CD4-positive, alpha-beta T cell (primary cell): ENCODE measurements at regions of chr18 and their contacts with region 1.

Region 1: DNA sequence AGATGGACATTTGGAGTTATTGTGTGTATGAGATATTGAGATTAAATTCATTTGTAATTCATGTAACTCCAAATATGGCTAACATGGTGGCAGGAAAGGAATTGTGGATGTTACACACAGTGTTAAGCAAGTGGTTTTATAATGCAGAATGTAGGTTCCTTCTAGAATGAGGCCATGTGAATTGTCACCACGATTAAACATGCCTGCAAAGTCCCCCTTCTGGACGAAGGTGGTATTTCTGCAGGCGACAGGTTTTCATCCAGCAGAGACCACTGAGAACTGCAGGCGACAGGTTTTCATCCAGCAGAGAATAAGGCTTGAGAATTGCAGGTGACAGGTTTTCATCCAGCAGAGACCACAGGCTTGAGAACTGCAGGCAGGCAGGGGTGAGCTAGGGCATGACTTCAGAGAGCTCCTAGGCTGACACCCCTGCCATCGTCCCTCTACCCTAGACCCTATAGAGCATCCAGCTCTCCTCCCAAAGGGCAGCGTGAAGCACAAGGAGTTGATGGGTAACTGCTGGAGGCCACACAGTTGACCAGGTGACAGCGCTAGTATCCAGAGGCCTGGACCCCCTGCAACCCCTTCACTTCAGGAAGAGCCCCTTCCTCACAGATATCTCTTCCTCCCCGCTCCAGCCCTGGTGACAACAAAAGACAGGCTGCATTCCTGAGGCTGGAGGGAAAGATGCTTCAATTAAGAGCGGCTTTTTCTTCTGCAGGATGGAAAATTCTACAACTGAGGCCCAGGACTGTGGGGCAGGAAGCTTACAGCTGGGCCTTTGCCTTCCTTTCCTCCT is 175.8 kb downstream of the LOXHD1 start:
- DNase-seq: peak; percentile 24 to 68 (median 48)
- ATAC-seq: peak; percentile 61
- H3K4me3 ChIP-seq: no peak overlapping the region
- H3K4me3 Mint-ChIP-seq: no peak overlapping the region
- H3K27ac ChIP-seq: no peak overlapping the region
- H3K27ac Mint-ChIP-seq: no peak overlapping the region
- H3K4me1 ChIP-seq: no peaks in the 10 kb centered on the region
- H3K4me1 Mint-ChIP-seq: no peaks in the 10 kb centered on the region
- H3K27me3 ChIP-seq: peaks cover 0 to 5% of the 10 kb centered on the region in 2 experiments
- H3K27me3 Mint-ChIP-seq: peaks cover 22% of the 10 kb centered on the region
- CTCF ChIP-seq: peak; percentile 65

Region 2: GRCh38 chr18:46424898-46425297 is 56.3 kb before region 1 on chr18:
- CTCF ChIA-PET with region 1: no interaction called
- POLR2A ChIA-PET with region 1: no interaction called
- intact Hi-C with region 1: loop called in 1 of 2 experiments (anchors 10 kb)
- DNase-seq: no peak
- ATAC-seq: no peak
- H3K4me3 ChIP-seq: no peak overlapping the region
- H3K4me3 Mint-ChIP-seq: no peak overlapping the region
- H3K27ac ChIP-seq: no peak overlapping the region
- H3K27ac Mint-ChIP-seq: no peak overlapping the region
- H3K4me1 ChIP-seq: peaks cover 5% of the 10 kb centered on the region
- H3K4me1 Mint-ChIP-seq: no peaks in the 10 kb centered on the region
- H3K27me3 ChIP-seq: no peaks in the 10 kb centered on the region
- H3K27me3 Mint-ChIP-seq: no peaks in the 10 kb centered on the region
- CTCF ChIP-seq: no peak